ENCODE measurements at regions of chr5 and their contacts with region 1.

Region 1: GRCh38 chr5:82351754-82352145 is 73.6 kb upstream of the RPS23 start:
- DNase-seq: peak; percentile 85
- H3K4me3 ChIP-seq: no peak overlapping the region
- H3K27ac ChIP-seq: peak overlapping the region; percentile 63
- H3K4me1 ChIP-seq: peaks cover 28% of the 10 kb centered on the region
- H3K27me3 ChIP-seq: no peaks in the 10 kb centered on the region
- CTCF ChIP-seq: peak; percentile 54 to 58
- POLR2A ChIP-seq: no peak

Region 2: GRCh38 chr5:81825237-81825636 is 526.5 kb before region 1 on chr5:
- CTCF ChIA-PET with region 1: no interaction called
- POLR2A ChIA-PET with region 1: no interaction called
- dilution Hi-C with region 1: no loop called
- intact Hi-C with region 1: no loop called
- DNase-seq: no peak
- H3K4me3 ChIP-seq: no peak overlapping the region
- H3K27ac ChIP-seq: no peak overlapping the region
- H3K4me1 ChIP-seq: no peaks in the 10 kb centered on the region
- H3K27me3 ChIP-seq: peaks cover 0 to 1% of the 10 kb centered on the region in 2 experiments
- CTCF ChIP-seq: no peak
- POLR2A ChIP-seq: no peak

Region 3: GRCh38 chr5:82335806-82336205 is 15.9 kb before region 1 on chr5:
- CTCF ChIA-PET with region 1: no interaction called
- POLR2A ChIA-PET with region 1: no interaction called
- dilution Hi-C with region 1: no loop called
- intact Hi-C with region 1: no loop called
- DNase-seq: no peak
- H3K4me3 ChIP-seq: no peak overlapping the region
- H3K27ac ChIP-seq: no peak overlapping the region
- H3K4me1 ChIP-seq: no peaks in the 10 kb centered on the region
- H3K27me3 ChIP-seq: peaks cover 7 to 11% of the 10 kb centered on the region in 2 experiments
- CTCF ChIP-seq: no peak
- POLR2A ChIP-seq: no peak

Region 4: DNA sequence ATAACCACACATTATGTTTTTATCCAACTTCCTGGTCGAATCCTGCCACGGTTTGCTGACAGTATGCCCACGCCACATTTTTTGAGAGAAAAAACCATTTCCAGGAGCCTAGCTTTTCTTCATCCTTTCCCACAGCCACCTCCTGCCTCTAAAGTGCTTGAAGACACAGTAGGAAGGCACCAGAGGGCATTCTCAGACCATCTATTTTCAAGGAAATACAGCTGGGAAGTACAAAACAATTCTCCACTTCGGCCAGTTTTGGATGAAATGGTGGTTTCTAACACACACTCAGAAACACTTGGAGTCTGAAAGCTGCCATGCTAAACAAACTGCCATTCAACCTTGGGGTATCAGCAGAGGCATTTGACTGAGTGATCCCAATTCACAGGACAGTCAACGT is 12.7 kb after region 1 on chr5:
- CTCF ChIA-PET with region 1: interaction called, 28 read pairs
- POLR2A ChIA-PET with region 1: no interaction called
- dilution Hi-C with region 1: no loop called
- intact Hi-C with region 1: no loop called
- DNase-seq: peak; percentile 80
- H3K4me3 ChIP-seq: no peak overlapping the region
- H3K27ac ChIP-seq: no peak overlapping the region
- H3K4me1 ChIP-seq: peaks cover 9% of the 10 kb centered on the region
- H3K27me3 ChIP-seq: no peaks in the 10 kb centered on the region
- CTCF ChIP-seq: peak; percentile 55 to 58
- POLR2A ChIP-seq: no peak

Region 5: GRCh38 chr5:82421119-82421518 is 69.4 kb after region 1 on chr5:
- CTCF ChIA-PET with region 1: interaction called, 6 read pairs
- POLR2A ChIA-PET with region 1: no interaction called
- dilution Hi-C with region 1: no loop called
- intact Hi-C with region 1: loop called (anchors 1 kb)
- DNase-seq: peak; percentile 89
- H3K4me3 ChIP-seq: no peak overlapping the region
- H3K27ac ChIP-seq: no peak overlapping the region
- H3K4me1 ChIP-seq: peaks cover 11% of the 10 kb centered on the region
- H3K27me3 ChIP-seq: no peaks in the 10 kb centered on the region
- CTCF ChIP-seq: peak in 1 of 2 donors; percentile 10
- POLR2A ChIP-seq: no peak

Region 6: DNA sequence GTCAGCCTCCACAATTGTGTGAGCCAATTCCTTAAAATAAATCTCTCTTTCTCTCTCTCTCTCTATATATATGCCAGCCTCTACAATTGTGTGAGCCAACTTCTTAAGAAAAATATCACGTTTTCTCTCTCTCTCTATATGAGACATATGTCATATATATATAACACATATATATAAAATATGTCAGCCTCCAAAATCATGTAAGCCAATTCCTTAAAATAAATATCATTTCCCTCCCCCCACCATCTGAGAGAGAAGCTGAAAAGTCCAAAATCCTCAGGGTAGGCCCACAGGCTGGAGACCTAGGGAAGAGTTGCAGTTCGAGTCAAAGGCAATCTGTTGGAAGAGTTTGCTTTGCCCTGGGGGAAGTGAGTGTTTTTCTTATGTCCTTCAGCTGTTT is 84.5 kb after region 1 on chr5:
- CTCF ChIA-PET with region 1: no interaction called
- POLR2A ChIA-PET with region 1: no interaction called
- dilution Hi-C with region 1: no loop called
- intact Hi-C with region 1: no loop called
- DNase-seq: no peak
- H3K4me3 ChIP-seq: no peak overlapping the region
- H3K27ac ChIP-seq: no peak overlapping the region
- H3K4me1 ChIP-seq: no peaks in the 10 kb centered on the region
- H3K27me3 ChIP-seq: no peaks in the 10 kb centered on the region
- CTCF ChIP-seq: no peak
- POLR2A ChIP-seq: no peak

Region 7: DNA sequence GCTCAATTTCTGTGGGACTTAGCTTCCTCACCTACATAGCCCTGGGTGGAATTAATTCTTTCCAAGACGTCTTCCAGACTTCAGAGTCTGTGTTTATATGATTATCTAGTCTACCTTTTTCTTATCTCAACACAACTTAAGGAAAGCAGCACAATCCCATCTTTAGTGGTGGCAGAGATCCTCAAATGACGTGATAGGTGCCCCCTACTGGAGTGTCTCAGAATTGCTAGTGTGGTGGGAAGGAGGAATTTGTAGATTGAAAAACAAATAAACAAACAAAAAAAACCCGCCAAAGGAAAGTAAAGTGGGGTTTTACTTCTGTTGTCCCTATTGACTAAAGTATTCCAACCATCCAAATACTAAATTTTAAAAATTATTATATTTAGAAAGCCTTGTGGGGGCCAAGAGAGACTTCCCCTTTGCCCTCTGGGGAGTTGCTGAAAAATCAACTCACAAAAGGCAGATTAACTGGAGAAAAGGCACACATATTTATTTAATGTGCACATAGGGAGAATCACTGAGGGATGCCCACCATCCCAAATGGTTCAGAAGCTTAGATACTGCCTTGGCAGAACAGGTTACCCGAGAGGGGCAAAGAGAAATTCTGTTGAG is 442.2 kb after region 1 on chr5:
- CTCF ChIA-PET with region 1: interaction called, 6 read pairs
- POLR2A ChIA-PET with region 1: no interaction called
- dilution Hi-C with region 1: no loop called
- intact Hi-C with region 1: loop called (anchors 1 kb)
- DNase-seq: peak; percentile 53
- H3K4me3 ChIP-seq: no peak overlapping the region
- H3K27ac ChIP-seq: no peak overlapping the region
- H3K4me1 ChIP-seq: no peaks in the 10 kb centered on the region
- H3K27me3 ChIP-seq: peaks cover 0 to 7% of the 10 kb centered on the region in 2 experiments
- CTCF ChIP-seq: peak; percentile 67 to 69
- POLR2A ChIP-seq: no peak

Region 8: DNA sequence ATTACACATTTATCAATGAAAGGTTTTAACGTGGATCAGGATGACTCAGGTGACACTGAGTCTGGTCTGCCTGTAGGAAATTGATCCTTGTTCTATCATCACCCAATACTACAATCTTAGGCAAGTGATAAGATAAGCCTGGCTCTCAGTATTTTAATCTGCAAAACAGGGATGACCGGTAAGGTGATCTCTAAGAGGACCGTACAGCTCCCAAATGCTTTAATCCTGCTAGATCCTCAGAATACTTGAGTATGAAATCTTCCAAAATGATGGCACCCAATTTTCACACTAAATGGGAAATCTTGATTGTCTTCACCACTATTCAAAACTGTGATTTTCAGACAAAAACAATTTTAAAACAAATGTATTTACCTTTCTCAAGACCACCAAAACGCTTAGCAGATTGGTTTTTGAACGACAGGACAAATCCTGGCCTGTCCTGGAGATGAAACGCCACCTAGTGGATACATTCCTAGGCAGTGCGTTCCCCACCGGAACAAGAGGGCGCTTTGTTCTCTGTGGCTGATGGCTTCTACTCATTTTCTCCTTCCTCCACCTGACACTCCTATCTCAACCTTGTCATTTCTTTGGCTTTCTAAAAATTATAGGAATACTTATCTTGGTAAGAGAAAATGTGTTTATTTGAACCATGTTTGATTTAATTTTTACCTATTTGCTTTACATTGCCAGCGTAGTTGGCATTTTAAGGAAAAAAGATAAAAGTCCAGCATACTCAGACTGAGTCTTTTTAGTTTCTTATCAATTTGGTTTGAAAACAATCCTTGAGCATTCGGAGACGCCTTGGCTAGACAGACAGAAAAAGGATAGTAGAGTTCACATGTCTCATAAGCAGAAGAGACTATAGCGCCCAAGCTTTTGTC is 1078.6 kb after region 1 on chr5:
- CTCF ChIA-PET with region 1: interaction called, 9 read pairs
- POLR2A ChIA-PET with region 1: no interaction called
- dilution Hi-C with region 1: no loop called
- intact Hi-C with region 1: loop called (anchors 1 kb)
- DNase-seq: peak; percentile 67
- H3K4me3 ChIP-seq: no peak overlapping the region
- H3K27ac ChIP-seq: no peak overlapping the region
- H3K4me1 ChIP-seq: no peaks in the 10 kb centered on the region
- H3K27me3 ChIP-seq: peaks cover 5 to 8% of the 10 kb centered on the region in 2 experiments
- CTCF ChIP-seq: peak; percentile 89 to 96
- POLR2A ChIP-seq: no peak

Region 9: DNA sequence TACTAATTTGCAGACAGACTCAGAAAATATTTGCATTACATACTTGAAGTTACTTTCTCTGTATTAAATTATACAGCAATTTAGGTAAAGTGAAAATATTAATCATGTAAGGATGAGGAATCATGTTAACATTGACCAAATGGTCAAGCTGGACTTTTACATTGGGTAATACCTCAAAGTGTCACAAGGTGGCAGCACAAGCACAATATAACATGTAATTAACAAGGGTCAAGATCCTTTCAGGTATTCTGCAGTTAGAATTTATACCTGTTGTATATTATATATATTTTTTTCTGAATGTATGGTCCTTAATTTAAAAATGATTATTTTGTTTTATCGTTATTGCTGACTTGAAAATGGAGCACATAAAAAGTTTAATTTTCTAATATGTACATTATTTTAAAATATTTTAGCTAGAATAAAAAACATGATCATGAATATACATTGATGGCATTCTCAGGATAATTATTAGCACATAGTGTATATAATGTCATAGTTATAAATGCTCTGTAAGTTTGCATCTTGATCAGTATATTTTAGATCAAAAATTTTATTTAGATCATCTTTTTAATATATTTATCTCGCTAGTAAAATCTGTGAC is 1360.4 kb after region 1 on chr5:
- CTCF ChIA-PET with region 1: interaction called, 4 read pairs
- POLR2A ChIA-PET with region 1: no interaction called
- dilution Hi-C with region 1: no loop called
- intact Hi-C with region 1: loop called (anchors 5 kb)
- DNase-seq: peak; percentile 64
- H3K4me3 ChIP-seq: no peak overlapping the region
- H3K27ac ChIP-seq: no peak overlapping the region
- H3K4me1 ChIP-seq: no peaks in the 10 kb centered on the region
- H3K27me3 ChIP-seq: peaks cover 2 to 6% of the 10 kb centered on the region in 2 experiments
- CTCF ChIP-seq: peak; percentile 51 to 57
- POLR2A ChIP-seq: no peak